ENCODE measurements at regions of chr18 and their contacts with region 1.

Region 1: DNA sequence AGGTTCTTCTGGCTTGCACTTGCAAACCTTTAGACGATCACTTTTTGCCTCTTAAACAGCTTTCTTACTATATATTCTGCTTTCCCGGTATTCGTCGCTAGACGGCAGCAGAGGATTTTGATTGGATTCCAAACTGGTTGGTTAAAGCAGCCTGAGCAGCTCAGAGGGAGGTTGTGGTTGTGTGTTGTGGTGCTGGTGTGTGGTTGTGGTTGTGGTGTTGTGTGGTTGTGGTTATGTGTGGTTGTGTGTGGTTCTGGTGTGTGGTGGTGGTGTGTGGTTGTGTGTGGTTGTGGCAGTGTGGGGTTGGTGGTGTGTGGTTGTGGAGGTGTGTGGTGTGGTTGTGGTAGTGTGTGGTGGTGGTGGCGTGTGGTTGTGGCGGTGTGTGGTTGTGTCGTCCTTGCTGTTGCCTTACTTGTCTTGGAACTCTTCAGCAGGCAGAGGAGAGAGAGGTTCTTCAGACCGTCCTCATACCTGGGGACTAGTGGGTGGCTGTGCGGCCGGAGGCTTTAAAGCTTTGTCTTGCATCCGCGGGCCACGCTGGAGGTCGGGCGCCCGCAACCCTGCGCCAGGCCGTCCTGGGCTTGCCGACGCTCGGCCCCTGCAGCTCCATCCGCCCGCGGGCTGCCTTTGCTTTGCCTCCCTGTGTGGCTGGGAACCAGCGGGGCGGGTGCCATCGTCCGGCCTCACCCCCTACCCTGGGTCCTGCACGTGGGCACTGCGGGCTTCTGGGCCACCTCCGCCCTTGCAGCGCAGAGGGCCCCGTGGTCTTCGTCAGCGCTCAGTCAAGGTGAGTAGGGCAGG is 190.8 kb downstream of the ARHGAP28 start:
- DNase-seq: peak; percentile 27 to 85 (median 59)
- H3K4me3 ChIP-seq: no peak overlapping the region
- H3K27ac ChIP-seq: no peak overlapping the region
- H3K4me1 ChIP-seq: no peaks in the 10 kb centered on the region
- H3K27me3 ChIP-seq: peaks cover 6% of the 10 kb centered on the region
- CTCF ChIP-seq: peak; percentile 31 to 84 (median 64)
- POLR2A ChIP-seq: no peak

Region 2: GRCh38 chr18:7000484-7001096 is 80.3 kb after region 1 on chr18:
- intact Hi-C with region 1: loop called in 1 of 2 experiments (anchors 5 kb)
- DNase-seq: peak in 1 of 7 donors; percentile 13
- H3K4me3 ChIP-seq: no peak overlapping the region
- H3K27ac ChIP-seq: no peak overlapping the region
- H3K4me1 ChIP-seq: no peaks in the 10 kb centered on the region
- H3K27me3 ChIP-seq: no peaks in the 10 kb centered on the region
- CTCF ChIP-seq: peak; percentile 41 to 57 (median 44)
- POLR2A ChIP-seq: no peak

Region 3: DNA sequence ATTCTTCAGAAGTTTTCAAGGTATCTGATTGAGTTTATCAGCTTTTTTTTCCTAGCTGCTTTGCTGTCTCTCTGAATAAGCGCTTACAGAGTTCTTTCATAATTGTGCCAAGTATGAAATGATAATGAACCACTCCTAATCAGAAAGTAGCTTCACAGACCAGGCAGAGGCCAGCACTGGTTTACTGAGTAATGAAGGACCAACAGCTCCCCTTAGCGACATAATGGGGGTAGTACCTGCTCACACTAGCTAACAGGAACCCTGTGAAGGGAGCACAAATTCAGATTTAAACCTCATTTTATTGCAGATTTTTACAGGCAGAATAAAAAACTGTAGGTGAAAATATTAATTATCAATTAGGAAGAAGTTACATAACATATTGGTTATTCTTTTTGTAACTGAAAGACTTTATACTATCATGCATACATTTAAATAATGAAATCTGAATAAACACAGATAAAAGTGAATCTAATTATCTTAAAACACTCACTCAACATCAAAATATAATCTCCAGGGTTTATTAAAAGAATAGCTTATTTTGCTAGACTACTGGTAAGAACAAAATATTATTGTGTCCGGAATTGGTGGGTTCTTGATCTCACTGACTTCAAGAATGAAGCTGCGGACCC is 256.9 kb after region 1 on chr18:
- intact Hi-C with region 1: loop called (anchors 5 to 10 kb)
- DNase-seq: peak; percentile 59 to 88 (median 76)
- H3K4me3 ChIP-seq: no peak overlapping the region
- H3K27ac ChIP-seq: no peak overlapping the region
- H3K4me1 ChIP-seq: no peaks in the 10 kb centered on the region
- H3K27me3 ChIP-seq: peaks cover 4% of the 10 kb centered on the region
- CTCF ChIP-seq: peak; percentile 52 to 78 (median 75)
- POLR2A ChIP-seq: no peak

Measured in adrenal gland (tissue), 19 donors.